ENCODE measurements at regions of chr16 and their contacts with region 1.

Region 1: DNA sequence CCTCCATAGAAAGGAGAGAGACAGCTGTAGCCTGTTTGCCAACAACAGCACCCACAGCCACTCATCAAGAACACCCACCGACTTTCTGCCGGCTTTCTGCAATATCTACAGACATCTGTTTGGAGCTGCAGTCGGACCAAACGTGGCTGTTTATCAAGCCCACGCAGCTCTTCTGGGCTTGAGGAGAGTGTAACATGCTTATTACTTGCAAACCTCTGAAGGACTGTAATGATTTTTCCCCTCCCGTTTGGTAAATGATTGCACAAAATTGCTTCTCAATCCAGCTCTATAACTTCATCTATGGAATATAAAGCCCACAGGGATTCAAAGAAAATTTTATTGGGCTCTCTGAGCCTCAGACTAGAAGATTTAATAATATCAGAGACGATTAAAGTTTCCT is 100.5 kb downstream of the VAT1L start:
- DNase-seq: no peak
- H3K4me3 ChIP-seq: no peak overlapping the region
- H3K27ac ChIP-seq: peak overlapping the region; percentile 13
- H3K27me3 ChIP-seq: no peaks in the 10 kb centered on the region
- CTCF ChIP-seq: no peak

Region 2: DNA sequence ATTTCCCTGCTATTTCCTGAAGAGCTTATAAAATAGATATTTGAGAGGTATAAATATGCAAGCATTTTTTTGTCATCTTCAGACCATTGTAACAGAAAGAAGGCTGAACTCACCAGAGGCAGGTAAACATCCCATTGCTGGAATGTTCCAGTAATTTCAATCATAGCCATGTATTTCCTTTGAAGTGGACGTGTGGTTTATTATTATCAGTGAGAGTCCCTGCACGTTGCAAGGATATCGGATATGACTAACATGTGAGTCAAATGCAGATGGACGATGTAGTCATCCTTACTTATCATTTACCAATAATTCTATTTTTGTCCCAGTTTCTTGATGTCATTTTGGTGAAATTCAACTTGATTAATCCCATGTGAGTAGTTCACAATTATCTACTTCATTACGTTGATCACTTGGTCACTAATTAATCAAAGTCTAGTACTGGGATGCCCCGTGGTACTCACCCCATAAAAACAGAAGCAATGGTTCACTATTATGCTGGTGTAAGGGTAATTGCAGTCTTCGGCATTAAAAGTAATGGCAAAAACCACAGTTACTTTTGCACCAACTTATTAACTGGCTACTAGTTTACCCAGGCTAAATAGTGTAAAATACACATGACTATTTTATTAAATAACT is 11.0 kb before region 1 on chr16:
- CTCF ChIA-PET with region 1: interaction called, 3 read pairs
- POLR2A ChIA-PET with region 1: interaction called, 14 read pairs
- DNase-seq: peak; percentile 77
- H3K4me3 ChIP-seq: no peak overlapping the region
- H3K27ac ChIP-seq: no peak overlapping the region
- H3K27me3 ChIP-seq: no peaks in the 10 kb centered on the region
- CTCF ChIP-seq: no peak

Measured in AG04450 (cell line).